GM10248 (cell line): ENCODE measurements at regions of chr12 and their contacts with region 1.

Region 1: GRCh38 chr12:6965026-6965661 is 5.3 kb downstream of the PHB2 start:
- DNase-seq: peak; percentile 84
- CTCF ChIP-seq: peak; percentile 98

Region 2: DNA sequence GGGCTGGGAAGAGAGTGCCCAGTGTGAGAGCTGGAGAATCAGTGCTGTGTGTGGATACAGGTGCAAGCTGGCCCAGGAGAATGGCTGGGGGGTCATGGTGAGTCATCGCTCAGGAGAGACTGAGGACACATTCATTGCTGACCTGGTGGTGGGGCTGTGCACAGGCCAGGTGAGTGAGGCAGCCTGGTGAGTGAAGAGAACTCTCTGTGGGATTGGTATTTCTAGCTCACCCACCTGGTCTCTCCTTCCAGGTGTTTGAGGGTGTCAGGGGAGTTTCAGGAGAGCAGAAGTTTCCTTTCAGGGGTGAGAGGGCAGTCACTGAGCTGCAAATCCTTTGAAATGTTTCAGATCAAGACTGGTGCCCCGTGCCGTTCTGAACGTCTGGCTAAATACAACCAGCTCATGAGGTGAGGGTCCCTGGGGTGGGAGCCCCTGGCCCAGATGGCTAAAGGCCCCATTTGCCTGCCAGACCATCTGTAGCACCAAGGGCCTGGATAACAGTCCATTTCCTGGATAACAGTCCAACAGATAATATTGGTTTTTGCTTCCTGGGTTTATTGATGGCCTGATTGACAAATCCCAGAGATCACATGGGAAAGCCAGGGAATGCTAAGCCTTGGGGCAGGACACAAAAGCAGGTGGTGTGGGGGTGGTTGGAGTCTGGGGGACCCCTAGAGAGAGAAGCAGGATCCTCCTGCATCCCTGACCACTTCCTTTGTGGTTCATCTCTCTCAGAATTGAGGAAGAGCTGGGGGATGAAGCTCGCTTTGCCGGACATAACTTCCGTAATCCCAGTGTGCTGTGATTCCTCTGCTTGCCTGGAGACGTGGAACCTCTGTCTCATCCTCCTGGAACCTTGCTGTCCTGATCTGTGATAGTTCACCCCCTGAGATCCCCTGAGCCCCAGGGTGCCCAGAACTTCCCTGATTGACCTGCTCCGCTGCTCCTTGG is 42.9 kb before region 1 on chr12:
- CTCF ChIA-PET with region 1: interaction called, 41 read pairs
- POLR2A ChIA-PET with region 1: no interaction called
- DNase-seq: no peak
- CTCF ChIP-seq: no peak

Region 3: DNA sequence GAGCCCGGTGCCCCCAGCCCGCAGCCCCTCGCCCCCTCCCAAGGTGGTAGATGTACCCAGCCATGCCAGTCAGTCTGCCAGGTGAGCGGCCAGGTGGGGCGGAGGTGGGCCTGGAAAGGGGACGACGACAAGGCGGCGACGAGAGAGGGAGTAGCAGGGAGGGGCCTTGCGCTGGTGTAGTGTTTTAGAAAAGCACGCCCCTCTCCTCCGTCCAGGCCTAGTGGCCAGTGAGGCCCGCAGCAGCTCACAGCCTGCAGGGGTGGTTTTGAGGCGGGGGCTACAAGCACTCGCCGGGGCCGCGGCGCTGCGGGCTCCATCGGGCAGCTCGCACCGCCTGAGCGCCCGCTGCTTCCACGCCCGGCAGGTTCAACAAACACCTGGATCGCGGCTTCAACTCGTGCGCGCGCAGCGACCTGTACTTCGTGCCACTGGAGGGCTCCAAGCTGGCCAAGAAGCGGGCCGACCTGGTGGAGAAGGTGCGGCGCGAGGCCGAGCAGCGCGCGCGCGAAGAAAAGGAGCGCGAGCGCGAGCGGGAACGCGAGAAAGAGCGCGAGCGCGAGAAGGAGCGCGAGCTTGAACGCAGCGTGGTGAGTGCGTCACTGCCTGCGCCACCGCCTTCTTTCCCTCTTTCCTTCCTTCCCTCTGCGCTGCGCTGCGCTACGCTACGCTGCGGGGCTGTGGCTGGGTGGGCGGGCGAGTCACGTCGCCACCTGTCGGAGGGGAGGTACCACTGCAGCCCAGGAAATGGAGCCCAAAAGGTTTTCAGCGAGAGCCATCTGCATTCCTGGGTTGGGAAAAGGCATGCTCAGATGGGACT is 27.5 kb before region 1 on chr12:
- CTCF ChIA-PET with region 1: interaction called, 530 read pairs
- POLR2A ChIA-PET with region 1: interaction called, 147 read pairs
- DNase-seq: peak; percentile 87
- CTCF ChIP-seq: peak; percentile 98

Region 4: DNA sequence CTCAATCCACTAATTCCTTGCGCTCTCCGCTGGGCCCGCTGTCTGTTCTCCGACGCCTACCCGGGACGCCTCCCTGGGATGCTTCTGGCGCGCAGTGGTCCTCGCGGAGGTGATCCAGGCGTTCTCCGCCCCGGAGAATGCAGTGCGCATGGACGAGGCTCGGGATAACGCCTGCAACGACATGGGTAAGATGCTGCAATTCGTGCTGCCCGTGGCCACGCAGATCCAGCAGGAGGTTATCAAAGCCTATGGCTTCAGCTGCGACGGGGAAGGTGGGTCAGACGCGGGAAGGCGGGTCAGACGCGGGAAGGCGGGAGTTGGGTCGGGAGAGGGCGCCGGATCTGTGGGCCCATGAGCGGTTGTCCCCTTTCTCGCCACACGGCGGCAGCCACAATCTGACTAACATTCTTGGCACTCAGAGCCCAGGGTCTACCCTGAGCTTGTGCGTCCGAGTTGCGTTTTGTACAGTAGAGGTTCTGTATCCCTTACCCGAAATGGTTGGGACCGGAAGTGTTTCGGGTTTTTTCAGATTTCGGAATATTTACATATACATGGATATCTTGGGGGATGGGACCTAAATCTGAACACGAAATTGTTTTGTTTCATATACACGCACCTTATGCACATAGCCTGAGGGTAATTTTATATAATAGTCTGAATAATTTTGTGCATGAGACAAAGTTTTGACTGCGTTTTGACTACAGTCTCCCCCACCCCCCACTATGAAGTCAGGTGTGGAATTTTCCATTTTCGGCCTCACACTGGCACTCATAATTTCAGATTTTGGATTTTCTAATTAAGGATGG is 20.6 kb before region 1 on chr12:
- CTCF ChIA-PET with region 1: interaction called, 530 read pairs
- POLR2A ChIA-PET with region 1: interaction called, 147 read pairs
- DNase-seq: peak; percentile 79
- CTCF ChIP-seq: peak; percentile 94

Region 5: DNA sequence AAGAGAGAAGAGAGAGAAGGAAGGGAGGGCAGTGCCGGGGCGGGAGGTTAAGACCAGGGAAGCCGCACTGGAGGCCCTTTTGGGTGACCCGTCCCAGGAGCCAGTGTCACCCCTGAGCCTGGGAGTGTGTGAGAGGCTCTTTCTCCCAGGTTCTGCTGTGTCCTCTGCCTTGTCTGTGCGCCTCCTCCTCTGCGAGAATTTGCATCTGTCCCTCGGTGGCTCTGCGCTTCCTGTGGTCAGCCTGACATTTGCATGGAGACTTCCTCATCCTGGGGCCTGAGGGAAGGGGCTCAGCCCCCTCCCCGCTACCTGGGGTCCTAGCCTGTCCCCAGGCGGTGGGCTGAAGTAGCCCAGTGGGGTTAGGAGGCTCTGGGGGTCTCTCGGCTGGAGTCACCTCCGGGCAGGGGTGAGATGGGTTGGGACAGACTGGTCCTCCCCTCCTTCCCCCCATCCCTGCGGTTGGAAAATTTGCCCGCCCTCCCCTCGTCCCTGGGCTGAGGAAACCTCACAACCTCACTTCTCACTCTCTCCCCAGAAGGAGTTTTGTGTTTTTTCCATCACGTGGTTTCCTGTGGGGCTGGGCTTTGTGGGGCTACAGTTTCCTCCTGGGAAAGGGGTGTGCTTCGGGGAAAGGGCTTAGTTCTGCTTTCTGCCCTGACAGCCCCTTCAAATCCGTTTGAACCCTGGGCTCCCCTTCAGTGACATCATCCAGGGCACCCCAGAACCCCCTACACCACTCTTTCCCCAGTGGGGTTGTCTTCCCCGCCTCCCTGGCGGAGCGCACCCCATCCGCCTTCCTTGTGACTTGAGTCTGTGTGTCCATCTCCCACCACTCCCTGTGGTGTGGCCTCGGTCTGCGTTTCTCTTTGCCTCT is 11.5 kb before region 1 on chr12:
- CTCF ChIA-PET with region 1: interaction called, 530 read pairs
- POLR2A ChIA-PET with region 1: interaction called, 8 read pairs
- DNase-seq: peak; percentile 80
- CTCF ChIP-seq: no peak

Region 6: GRCh38 chr12:6975297-6976027 is 10.3 kb after region 1 on chr12:
- CTCF ChIA-PET with region 1: interaction called, 17 read pairs
- POLR2A ChIA-PET with region 1: no interaction called
- DNase-seq: no peak
- CTCF ChIP-seq: no peak

Region 7: GRCh38 chr12:7047306-7047705 is 82.2 kb after region 1 on chr12:
- CTCF ChIA-PET with region 1: no interaction called
- POLR2A ChIA-PET with region 1: no interaction called
- DNase-seq: no peak
- CTCF ChIP-seq: no peak